ENCODE measurements at regions of chr5 and their contacts with region 1.

Region 1: DNA sequence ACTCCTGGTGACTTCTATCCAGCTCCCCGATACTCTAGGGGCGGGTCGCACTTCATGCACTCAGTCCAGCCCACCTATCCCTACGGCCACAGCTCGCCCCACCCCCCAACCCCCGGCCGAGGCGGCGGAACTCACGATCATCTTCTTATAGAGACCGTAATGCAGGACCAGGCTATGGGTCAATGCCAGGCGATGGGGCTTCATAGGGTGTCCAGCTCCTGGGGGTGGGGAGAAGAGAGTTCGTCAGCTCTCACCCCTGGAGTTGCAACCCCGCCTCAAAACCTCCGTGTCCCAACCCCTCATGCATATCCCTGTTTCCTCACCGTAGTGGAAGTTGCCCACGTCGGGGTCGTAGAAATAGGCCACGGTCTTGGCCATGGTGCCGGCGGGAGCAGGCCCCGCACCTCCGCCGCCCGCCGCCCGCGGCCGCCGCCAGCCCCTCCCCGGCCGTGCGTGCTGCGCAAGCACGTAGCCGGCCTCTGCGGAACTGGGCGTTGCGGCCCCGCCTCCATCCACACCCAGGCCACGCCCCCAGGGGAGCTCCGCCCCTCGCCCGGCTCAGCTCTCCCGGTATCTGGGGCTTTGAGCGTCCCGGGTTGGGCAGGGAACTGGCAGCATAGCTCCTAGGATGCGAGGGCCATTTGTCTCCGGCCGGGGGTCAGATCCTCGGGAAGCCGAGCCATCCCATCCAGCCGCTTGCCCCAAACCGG is at the starts of genes HDAC3 and RELL2:
- DNase-seq: no peak
- ATAC-seq: peak; percentile 96
- H3K4me3 ChIP-seq: peak within 1 kb of the TSS; percentile 84 to 89
- H3K27ac ChIP-seq: peak within 1 kb of the TSS; percentile 87
- H3K4me1 ChIP-seq: peaks cover 11% of the 10 kb centered on the region
- H3K27me3 ChIP-seq: no peaks in the 10 kb centered on the region
- CTCF ChIP-seq: no peak
- total RNA-seq, gene HDAC3: 75.5 TPM
- total RNA-seq, gene RELL2: 13.3 TPM

Region 2: DNA sequence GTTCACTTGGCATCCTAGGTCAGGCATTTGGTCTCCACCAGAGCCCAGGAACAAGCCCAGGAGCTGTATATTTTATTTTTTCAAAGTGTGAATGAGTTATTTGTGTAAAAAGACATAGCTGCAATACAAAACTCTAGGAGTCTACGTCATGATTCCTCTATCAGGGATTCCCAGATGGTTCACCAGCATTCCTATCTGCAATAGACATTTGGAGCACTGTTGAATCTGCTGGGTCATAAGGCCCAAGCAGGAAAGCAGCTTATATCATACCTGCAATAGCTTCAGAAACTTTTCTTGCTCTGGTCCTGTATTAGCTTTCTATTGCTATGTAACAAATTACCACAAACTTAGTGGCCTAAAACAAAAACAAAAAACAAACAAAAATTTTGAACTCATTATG is 270.4 kb after region 1 on chr5:
- CTCF ChIA-PET with region 1: no interaction called
- POLR2A ChIA-PET with region 1: interaction called, 19 read pairs
- in situ Hi-C with region 1: no loop called
- intact Hi-C with region 1: no loop called
- DNase-seq: no peak
- ATAC-seq: no peak
- H3K4me3 ChIP-seq: no peak overlapping the region
- H3K27ac ChIP-seq: no peak overlapping the region
- H3K4me1 ChIP-seq: no peaks in the 10 kb centered on the region
- H3K27me3 ChIP-seq: no peaks in the 10 kb centered on the region
- CTCF ChIP-seq: no peak

Measured in Panc1 (cell line).